Activated CD8-positive, alpha-beta memory T cell treated with anti-CD3 and anti-CD28 coated beads, Interleukin-2, amount 10 ng/mL, durations not matched to agents 7 days and 5 days (primary cell): ENCODE measurements at regions of chr16 and their contacts with region 1.

Region 1: DNA sequence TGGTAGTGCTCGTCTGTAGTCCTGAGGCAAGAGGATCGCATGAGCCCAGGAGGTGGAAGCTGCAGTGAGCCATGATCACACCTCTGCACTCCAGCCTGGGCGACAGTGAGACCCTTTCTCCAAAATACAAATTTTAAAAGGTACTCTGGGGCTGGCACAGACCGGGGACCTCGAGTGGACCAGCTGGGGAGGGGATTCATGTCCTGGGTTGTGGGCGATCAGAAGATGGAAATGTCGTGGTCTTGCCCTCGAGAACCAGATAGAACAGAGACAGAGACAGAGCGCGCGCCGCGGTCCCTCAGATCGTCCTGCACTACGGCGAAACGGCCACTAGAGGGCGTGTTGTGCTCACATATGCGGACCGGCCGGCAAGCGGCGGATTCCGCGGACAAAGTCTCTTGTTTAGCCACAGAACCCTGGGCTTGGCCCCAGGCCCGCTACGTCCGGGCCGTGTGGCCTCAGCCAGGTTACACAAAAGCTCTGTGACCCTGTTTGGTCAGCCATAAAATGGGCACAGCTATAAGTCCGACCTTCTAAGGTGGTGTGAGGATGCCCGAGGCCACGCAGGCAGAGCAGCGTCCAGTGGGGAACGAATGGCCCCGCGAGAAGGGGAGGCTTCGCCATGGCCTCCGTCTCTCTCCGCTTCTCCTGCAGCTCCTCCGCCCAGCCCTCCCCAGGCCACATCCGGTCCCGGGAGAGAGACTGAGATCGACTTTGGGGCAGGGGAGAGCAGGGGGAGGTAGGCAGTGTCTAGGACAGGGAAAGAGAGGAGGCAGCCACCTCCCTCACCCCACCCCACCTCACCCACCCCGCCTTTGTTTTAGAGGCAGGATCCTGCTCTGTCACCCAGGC is 14.6 kb upstream of the SBK1 start:
- DNase-seq: peak; percentile 89
- ATAC-seq: peak; percentile 89
- H3K4me3 Mint-ChIP-seq: peak overlapping the region; percentile 56
- H3K27ac Mint-ChIP-seq: peak overlapping the region; percentile 83
- H3K4me1 Mint-ChIP-seq: peaks cover 32% of the 10 kb centered on the region
- H3K27me3 Mint-ChIP-seq: peaks cover 29% of the 10 kb centered on the region

Region 2: DNA sequence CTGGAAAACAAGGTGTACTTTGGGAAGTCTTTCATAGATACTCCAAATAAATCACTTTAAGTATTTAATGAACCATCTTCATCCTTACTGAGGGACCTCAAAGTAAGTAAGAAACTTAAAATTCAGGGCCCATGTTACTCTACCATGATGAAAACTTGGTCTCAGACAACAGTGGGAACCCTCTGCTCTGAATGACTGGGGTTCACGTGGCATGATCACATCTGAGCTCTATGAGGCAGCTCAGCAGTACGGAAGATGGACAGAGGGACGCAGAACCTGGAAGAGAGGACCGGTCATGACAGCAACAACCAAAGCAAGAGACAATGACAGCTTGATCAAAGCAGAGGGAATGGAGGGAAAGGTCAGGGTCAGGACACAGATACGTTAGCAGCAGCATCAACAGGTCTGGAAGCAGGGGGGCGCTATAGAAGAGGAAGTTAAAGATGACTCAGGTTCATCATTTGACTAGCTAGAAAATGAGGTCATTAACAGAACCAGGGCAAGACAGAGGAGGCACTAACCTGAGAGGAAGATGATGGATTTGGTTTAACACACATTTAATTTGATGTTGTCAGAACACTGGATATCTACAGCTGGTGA is 75.5 kb before region 1 on chr16:
- CTCF ChIA-PET with region 1: no interaction called
- DNase-seq: peak; percentile 71
- ATAC-seq: peak; percentile 88
- H3K4me3 Mint-ChIP-seq: no peak overlapping the region
- H3K27ac Mint-ChIP-seq: peak overlapping the region; percentile 82
- H3K4me1 Mint-ChIP-seq: peaks cover 40% of the 10 kb centered on the region
- H3K27me3 Mint-ChIP-seq: no peaks in the 10 kb centered on the region

Region 3: GRCh38 chr16:28261942-28262341 is 15.8 kb before region 1 on chr16:
- CTCF ChIA-PET with region 1: interaction called, 12 read pairs
- DNase-seq: no peak
- ATAC-seq: no peak
- H3K4me3 Mint-ChIP-seq: no peak overlapping the region
- H3K27ac Mint-ChIP-seq: no peak overlapping the region
- H3K4me1 Mint-ChIP-seq: peaks cover 22% of the 10 kb centered on the region
- H3K27me3 Mint-ChIP-seq: peaks cover 43% of the 10 kb centered on the region

Region 4: DNA sequence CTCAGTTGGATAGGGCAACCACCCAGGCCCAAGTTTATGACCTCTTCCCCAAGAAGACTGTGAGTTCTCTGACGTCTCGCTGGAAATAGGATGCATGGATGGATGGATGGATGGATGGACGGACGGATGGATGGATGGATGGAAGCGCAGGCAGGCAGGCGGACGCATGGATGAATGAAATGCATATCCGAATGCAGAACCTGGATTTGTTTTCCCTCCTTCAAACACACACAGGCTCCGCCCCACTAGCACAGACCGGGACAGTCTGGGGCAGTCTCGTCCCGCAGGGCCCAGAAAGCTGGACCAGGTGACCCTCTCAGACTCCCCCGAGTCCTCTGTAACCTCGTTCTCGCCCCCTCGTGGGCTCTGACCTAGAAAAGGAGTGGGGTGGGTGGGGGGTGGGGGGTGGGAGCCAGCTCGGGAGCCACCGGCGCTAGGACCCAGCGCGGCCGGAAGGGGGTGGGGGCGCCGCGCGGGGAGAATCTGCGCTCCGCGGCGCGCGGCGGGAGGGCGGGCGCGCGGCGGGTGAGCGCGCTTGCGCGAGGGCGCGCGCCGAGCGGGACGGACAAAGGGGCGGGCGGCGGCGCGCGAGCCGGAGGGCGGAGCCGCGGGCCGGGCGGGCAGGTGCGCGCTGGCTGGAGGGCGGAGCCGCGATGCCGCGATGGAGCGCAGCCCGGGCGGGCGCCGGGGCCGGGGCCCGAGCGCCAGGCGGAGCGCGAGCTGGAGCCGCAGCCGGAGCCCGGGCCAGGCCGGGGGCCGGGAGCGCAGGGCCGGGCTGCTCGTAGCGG is 14.3 kb after region 1 on chr16 and contains the start of gene SBK1:
- CTCF ChIA-PET with region 1: interaction called, 34 read pairs
- DNase-seq: peak; percentile 85
- ATAC-seq: peak; percentile 97
- H3K4me3 Mint-ChIP-seq: peak within 1 kb of the TSS; percentile 84
- H3K27ac Mint-ChIP-seq: peak within 1 kb of the TSS; percentile 84
- H3K4me1 Mint-ChIP-seq: peaks cover 54% of the 10 kb centered on the region
- H3K27me3 Mint-ChIP-seq: peaks cover 14% of the 10 kb centered on the region
- total RNA-seq, gene SBK1: 3.2 to 11.3 TPM

Region 5: GRCh38 chr16:28297784-28298510 is 20.2 kb after region 1 on chr16:
- CTCF ChIA-PET with region 1: interaction called, 34 read pairs
- DNase-seq: peak; percentile 51
- ATAC-seq: peak; percentile 34
- H3K4me3 Mint-ChIP-seq: no peak overlapping the region
- H3K27ac Mint-ChIP-seq: peak overlapping the region; percentile 76
- H3K4me1 Mint-ChIP-seq: peaks cover 39% of the 10 kb centered on the region
- H3K27me3 Mint-ChIP-seq: peaks cover 11% of the 10 kb centered on the region

Region 6: DNA sequence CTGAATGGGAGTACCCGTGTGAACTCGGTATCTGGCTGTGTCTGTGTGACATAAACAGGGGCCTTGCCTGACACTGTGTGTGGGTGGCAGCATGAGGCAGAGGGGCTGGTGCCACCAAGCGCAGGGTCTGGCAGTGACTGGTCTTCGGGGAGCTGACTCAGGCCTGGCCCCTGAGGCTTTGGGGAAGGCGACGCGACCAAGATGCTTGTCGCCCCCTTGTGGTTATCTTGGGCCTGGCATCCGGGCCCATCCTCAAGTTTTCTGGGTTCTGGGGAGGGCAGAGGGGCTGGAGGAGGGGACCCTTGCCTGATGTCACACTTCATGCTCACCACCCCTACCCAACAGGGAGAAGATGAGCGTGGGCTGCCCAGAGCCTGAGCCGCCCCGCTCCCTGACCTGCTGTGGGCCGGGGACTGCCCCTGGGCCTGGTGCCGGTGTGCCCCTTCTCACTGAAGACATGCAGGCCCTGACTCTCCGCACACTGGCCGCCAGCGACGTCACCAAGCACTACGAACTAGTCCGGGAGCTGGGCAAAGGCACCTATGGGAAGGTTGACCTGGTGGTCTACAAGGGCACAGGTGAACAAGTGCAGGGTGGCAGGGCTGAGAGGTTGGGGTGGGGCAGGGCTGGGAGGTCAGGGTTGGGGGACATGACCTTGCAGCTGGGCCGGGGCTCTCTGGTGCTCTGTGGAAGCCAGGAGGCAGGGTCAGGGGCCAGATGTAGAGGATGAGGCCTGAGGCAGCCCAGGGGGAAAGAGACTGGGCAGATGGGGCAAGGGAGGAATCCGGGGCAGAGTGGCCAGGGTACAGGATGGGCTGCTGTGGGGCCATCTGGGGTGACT is 39.5 kb after region 1 on chr16:
- CTCF ChIA-PET with region 1: interaction called, 347 read pairs
- DNase-seq: peak; percentile 79
- ATAC-seq: peak; percentile 80
- H3K4me3 Mint-ChIP-seq: no peak overlapping the region
- H3K27ac Mint-ChIP-seq: no peak overlapping the region
- H3K4me1 Mint-ChIP-seq: peaks cover 10% of the 10 kb centered on the region
- H3K27me3 Mint-ChIP-seq: no peaks in the 10 kb centered on the region

Region 7: DNA sequence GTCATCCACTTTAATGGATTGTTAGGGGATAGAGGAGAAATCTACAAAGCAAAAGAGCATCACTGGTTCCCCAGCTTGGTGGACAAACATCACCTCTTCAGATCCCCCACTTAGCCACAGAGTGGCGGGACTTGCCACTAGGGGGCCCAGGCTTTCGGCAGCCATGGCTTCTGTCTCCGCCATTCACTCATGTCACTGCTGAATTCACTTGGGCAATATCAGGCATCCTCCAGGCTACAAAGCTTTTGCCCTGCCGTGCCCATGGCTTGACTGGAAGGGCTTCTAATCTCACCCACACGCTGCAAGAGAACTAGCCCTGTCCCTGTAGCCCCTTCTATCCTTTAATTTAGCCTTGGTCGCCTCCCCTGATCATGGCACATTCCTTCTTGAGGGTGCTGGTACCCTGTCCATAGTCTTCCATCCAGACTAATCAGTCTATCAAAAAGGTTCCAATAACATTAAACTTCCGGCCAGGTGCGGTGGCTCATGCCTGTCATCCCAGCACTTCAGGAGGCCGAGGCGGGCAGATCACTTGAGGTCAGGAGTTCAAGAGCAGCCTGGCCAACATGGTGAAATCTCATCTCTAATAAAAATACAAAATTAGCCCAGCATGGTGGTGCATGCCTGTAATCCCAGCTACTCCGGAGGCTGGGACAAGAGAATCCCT is 49.3 kb after region 1 on chr16:
- CTCF ChIA-PET with region 1: interaction called, 347 read pairs
- DNase-seq: peak; percentile 85
- ATAC-seq: peak; percentile 97
- H3K4me3 Mint-ChIP-seq: no peak overlapping the region
- H3K27ac Mint-ChIP-seq: no peak overlapping the region
- H3K4me1 Mint-ChIP-seq: peaks cover 6% of the 10 kb centered on the region
- H3K27me3 Mint-ChIP-seq: no peaks in the 10 kb centered on the region